H1 (cell line): ENCODE measurements at regions of chr12 and their contacts with region 1.

Region 1: GRCh38 chr12:15584366-15585041 is 204.7 kb downstream of the EPS8 start:
- DNase-seq: no peak
- H3K4me3 ChIP-seq: no peak overlapping the region
- H3K27ac ChIP-seq: no peak overlapping the region
- H3K4me1 ChIP-seq: no peaks in the 10 kb centered on the region
- H3K27me3 ChIP-seq: no peaks in the 10 kb centered on the region
- CTCF ChIP-seq: peak in 2 of 3 experiments; percentile 25 to 67; a peak in 2 of 4 replicates
- EP300 ChIP-seq: no peak
- POLR2A ChIP-seq: no peak
- RAD21 ChIP-seq: peak; percentile 57 to 59

Region 2: DNA sequence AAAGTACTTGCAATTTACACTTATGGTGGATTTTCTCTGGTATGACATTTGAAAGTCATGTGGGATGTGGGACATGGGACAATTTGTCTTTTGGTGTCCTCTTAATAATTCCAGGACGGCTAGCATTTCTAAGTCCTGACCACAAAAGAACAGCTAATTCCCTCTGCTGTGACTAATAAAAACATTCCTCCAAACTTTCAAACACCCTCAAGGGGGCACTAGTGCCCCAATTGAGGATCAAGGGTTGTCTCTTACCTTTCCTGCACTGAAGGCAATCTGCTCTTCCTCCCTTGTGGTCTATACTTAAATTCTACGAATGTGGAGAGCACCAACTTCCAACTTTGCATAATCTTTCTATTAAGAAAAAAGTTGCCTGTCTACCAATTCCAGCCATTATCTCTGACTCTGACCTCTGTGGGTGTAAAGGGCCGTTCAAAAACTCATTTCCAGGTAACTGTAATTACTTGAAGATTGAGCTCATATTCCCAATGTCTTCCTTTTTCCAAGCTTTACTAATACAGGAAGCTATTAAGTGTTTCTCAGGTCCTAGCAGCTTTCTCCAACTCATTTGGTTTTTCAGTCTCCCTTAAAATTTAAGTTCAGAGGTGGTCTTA is 52.0 kb before region 1 on chr12:
- CTCF ChIA-PET with region 1: interaction called, 35 read pairs
- POLR2A ChIA-PET with region 1: no interaction called
- DNase-seq: peak; percentile 36 to 56
- H3K4me3 ChIP-seq: no peak overlapping the region
- H3K27ac ChIP-seq: no peak overlapping the region
- H3K4me1 ChIP-seq: no peaks in the 10 kb centered on the region
- H3K27me3 ChIP-seq: no peaks in the 10 kb centered on the region
- CTCF ChIP-seq: peak in 2 of 3 experiments; percentile 70 to 76; a peak in 3 of 4 replicates
- EP300 ChIP-seq: no peak
- POLR2A ChIP-seq: no peak
- RAD21 ChIP-seq: peak; percentile 85 to 87

Region 3: GRCh38 chr12:15546102-15546701 is 38.3 kb before region 1 on chr12:
- CTCF ChIA-PET with region 1: interaction called, 26 read pairs
- POLR2A ChIA-PET with region 1: no interaction called
- DNase-seq: no peak
- H3K4me3 ChIP-seq: no peak overlapping the region
- H3K27ac ChIP-seq: no peak overlapping the region
- H3K4me1 ChIP-seq: no peaks in the 10 kb centered on the region
- H3K27me3 ChIP-seq: no peaks in the 10 kb centered on the region
- CTCF ChIP-seq: no peak
- EP300 ChIP-seq: no peak
- POLR2A ChIP-seq: no peak
- RAD21 ChIP-seq: no peak

Region 4: GRCh38 chr12:15563663-15564062 is 20.8 kb before region 1 on chr12:
- CTCF ChIA-PET with region 1: interaction called, 20 read pairs
- POLR2A ChIA-PET with region 1: no interaction called
- DNase-seq: no peak
- H3K4me3 ChIP-seq: no peak overlapping the region
- H3K27ac ChIP-seq: no peak overlapping the region
- H3K4me1 ChIP-seq: peaks cover 0 to 3% (median under 1%) of the 10 kb centered on the region in 4 experiments; a peak in 4 of 7 replicates
- H3K27me3 ChIP-seq: peaks cover 0 to 1% (median 0%) of the 10 kb centered on the region in 4 experiments; a peak in 1 of 7 replicates
- CTCF ChIP-seq: no peak
- EP300 ChIP-seq: no peak
- POLR2A ChIP-seq: no peak
- RAD21 ChIP-seq: no peak

Region 5: DNA sequence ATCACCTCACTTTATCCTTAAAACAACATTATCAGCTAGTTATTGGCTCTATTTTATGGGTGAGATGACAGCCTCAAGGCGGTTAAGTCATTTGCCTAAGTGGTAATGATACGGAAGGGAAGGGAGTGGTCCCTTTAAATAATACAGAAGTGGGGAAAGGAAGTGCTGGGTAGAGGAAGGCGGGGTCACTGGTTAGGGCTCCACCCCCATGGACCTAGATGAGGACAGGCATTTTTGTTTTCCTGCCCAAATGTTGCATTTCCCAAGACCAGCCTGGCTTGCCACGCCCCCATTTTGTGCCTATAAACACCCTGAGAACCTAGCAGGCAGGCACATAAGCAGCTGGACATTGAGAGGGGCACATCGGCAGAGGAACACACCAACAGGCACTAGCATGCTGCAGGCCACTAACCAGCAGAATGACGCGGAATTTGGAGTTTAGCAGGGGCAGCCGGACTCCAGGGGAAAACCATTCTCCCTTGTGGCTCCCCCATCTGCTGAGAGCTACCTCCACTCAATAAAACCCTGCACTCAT is 103.8 kb after region 1 on chr12:
- CTCF ChIA-PET with region 1: no interaction called
- POLR2A ChIA-PET with region 1: no interaction called
- DNase-seq: peak in 1 of 2 experiments; percentile 47
- H3K4me3 ChIP-seq: no peak overlapping the region
- H3K27ac ChIP-seq: no peak overlapping the region
- H3K4me1 ChIP-seq: peaks cover 0 to 8% (median 5%) of the 10 kb centered on the region in 4 experiments; a peak in 4 of 7 replicates
- H3K27me3 ChIP-seq: no peaks in the 10 kb centered on the region
- CTCF ChIP-seq: no peak
- EP300 ChIP-seq: no peak
- POLR2A ChIP-seq: no peak
- RAD21 ChIP-seq: no peak

Region 6: DNA sequence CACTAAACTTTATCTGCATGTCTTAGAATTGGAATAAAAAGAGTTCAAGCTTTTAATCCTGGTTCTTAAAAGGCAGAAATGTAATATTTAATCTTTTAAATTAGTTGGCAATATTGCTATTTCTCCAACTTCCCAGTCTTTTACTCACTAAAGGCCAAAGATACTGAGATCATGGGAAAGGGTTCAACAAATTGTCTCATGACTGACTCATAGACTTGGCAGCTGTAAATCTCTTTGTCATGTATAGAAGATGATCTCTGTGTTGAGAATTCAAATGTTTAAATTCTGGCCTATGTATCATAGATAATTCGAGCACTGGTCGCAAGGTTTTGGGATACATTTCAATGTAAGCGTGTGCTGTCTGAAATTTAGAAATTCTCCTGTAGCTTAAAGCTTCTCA is 257.6 kb after region 1 on chr12:
- CTCF ChIA-PET with region 1: interaction called, 10 read pairs
- POLR2A ChIA-PET with region 1: no interaction called
- DNase-seq: no peak
- H3K4me3 ChIP-seq: no peak overlapping the region
- H3K27ac ChIP-seq: no peak overlapping the region
- H3K4me1 ChIP-seq: no peaks in the 10 kb centered on the region
- H3K27me3 ChIP-seq: no peaks in the 10 kb centered on the region
- CTCF ChIP-seq: no peak
- EP300 ChIP-seq: no peak
- POLR2A ChIP-seq: no peak
- RAD21 ChIP-seq: no peak